GM13976 (cell line): ENCODE measurements at regions of chr10 and their contacts with region 1.

Region 1: DNA sequence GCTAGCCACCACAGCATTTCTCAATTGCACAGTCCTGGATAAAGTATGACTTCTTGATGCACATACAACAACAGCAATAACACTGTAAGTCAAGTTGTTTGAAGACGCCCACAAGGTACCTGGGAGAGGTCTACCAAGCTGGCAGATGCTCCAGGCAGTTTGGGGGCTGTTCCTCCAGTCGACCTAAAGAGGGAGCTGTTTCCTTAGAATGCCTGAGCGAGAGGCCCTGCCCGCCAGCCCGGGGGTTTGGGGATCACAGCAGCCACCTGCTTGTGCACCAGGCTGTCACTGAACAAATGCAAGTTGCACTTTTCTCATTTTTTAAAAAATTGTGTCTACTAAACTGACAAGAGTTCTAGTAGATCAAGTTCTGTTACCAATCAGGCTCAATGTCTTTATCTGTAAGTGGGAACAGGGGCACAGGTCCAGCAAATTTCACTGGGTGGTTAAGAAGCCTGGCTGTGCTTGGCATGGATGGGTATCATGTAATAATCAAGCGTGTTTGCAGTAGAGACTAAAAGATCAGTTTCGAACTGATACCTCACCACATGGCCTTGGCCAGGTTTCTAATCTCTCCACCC is 193.8 kb upstream of the ADO start:
- DNase-seq: peak; percentile 87
- CTCF ChIP-seq: peak; percentile 85

Region 2: DNA sequence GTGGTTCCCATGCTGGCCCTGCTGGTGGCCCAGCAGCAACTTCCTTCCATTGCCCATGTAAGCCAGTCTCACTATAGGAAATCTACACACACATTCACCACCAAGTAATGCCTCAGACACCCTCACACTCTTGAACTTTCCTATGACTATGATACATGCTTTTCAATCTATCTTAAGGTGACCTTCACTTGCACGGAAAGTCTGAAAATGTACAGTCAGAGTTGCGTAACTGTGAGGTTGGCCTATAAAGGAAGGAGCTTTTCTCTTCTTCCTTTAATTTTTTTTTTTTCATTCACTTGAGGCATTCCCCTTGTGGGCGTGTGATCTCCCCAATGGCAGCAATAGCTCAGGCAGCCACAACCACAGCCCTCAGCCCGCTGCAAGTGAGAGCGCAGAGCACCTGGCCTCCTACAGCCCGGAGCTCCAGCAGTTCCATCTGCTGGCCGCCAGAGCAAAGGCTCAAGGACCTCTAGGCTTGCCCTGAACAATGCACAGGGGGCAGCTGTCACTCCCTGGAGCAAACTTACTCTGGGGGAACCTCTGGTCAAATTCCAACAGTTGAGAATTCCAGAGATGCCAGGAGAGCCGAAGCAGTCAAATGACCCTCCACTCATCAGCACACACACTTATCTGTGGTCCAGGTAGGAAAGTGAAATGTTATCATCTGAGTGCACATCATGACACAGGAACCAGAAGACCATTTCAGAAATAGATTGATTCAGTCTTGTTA is 70.6 kb after region 1 on chr10:
- in situ Hi-C with region 1: loop called (anchors 5 kb)
- DNase-seq: peak; percentile 85
- CTCF ChIP-seq: peak; percentile 55